AG04449 (cell line): ENCODE measurements at regions of chr2 and their contacts with region 1.

Region 1: GRCh38 chr2:234135720-234136221 is 85.3 kb downstream of the SPP2 start:
- DNase-seq: peak; percentile 31
- H3K4me3 ChIP-seq: no peak overlapping the region
- CTCF ChIP-seq: peak; percentile 72

Region 2: GRCh38 chr2:234081970-234082822 is 53.6 kb before region 1 on chr2:
- CTCF ChIA-PET with region 1: no interaction called
- POLR2A ChIA-PET with region 1: no interaction called
- DNase-seq: no peak
- H3K4me3 ChIP-seq: no peak overlapping the region
- CTCF ChIP-seq: no peak

Region 3: GRCh38 chr2:234121999-234122398 is 13.8 kb before region 1 on chr2:
- CTCF ChIA-PET with region 1: interaction called, 10 read pairs
- POLR2A ChIA-PET with region 1: no interaction called
- DNase-seq: no peak
- H3K4me3 ChIP-seq: no peak overlapping the region
- CTCF ChIP-seq: no peak

Region 4: GRCh38 chr2:234164493-234165413 is 29.0 kb after region 1 on chr2:
- CTCF ChIA-PET with region 1: interaction called, 15 read pairs
- POLR2A ChIA-PET with region 1: no interaction called
- DNase-seq: no peak
- H3K4me3 ChIP-seq: no peak overlapping the region
- CTCF ChIP-seq: no peak

Region 5: GRCh38 chr2:234257856-234258561 is 122.2 kb after region 1 on chr2:
- CTCF ChIA-PET with region 1: interaction called, 50 read pairs
- POLR2A ChIA-PET with region 1: no interaction called
- DNase-seq: peak; percentile 96
- H3K4me3 ChIP-seq: no peak overlapping the region; the same call in 1 of the 2 replicates
- CTCF ChIP-seq: peak; percentile 86

Region 6: DNA sequence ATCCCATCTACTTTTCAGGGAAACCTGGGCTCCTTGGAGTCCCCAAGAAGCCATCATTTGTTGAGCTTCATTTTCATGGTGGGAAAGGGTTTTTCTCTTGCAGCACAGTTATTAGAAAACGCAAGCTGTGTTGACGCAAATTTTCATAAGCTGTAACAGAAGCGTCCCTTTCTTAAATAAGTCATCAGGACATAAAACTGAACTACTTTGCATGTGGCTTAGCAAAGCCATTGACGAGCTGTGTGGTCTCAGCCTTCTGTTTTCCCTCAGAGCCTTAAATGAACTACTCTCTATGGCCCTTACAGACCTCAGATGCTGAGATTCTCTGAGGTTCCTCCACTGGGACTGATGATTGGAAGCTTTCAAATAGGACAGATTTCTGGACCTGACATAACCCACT is 276.0 kb after region 1 on chr2:
- CTCF ChIA-PET with region 1: interaction called, 11 read pairs
- POLR2A ChIA-PET with region 1: no interaction called
- DNase-seq: no peak
- H3K4me3 ChIP-seq: no peak overlapping the region
- CTCF ChIP-seq: no peak

Region 7: DNA sequence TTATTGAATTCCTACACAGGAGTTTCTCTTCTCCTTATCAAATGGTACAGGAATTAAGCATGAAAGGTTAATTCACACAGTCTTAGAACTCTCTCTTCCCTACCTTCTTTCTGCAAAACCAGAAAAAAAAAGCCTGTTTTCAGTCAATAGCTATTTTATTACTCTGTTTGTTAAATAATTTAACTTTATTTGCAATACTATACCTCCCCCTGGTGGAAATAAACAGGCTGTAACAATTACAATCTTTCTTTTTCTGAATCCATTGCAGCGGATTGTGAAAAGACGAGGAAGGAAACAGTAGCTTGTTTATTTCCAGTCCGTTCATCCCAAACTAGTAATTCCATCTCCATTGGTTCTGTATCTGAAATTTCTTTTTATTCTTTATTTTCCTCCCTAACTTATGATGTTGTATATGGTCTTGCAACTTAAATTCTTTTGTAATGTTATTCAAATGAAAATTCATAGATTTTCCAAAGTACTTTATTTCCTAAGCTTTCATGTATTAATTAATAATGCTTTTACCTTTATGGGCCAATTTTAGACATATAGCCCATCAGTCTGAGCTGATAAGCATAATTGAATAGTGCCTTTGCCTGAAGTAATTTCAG is 981.2 kb after region 1 on chr2:
- CTCF ChIA-PET with region 1: interaction called, 10 read pairs
- POLR2A ChIA-PET with region 1: no interaction called
- DNase-seq: no peak
- H3K4me3 ChIP-seq: no peak overlapping the region
- CTCF ChIP-seq: peak; percentile 22